Ascending aorta (tissue), 2 donors: ENCODE measurements at regions of chr16 and their contacts with region 1.

Region 1: GRCh38 chr16:10743610-10744393 is at the start of gene NUBP1:
- DNase-seq: peak; percentile 99 to 100
- H3K4me3 ChIP-seq: peak within 1 kb of the TSS; percentile 66 to 71
- H3K27ac ChIP-seq: peak within 1 kb of the TSS; percentile 95
- H3K4me1 ChIP-seq: peaks cover 12 to 24% of the 10 kb centered on the region in 2 donors
- H3K27me3 ChIP-seq: no peaks in the 10 kb centered on the region
- CTCF ChIP-seq: no peak
- total RNA-seq, gene NUBP1: 13.3 TPM

Region 2: DNA sequence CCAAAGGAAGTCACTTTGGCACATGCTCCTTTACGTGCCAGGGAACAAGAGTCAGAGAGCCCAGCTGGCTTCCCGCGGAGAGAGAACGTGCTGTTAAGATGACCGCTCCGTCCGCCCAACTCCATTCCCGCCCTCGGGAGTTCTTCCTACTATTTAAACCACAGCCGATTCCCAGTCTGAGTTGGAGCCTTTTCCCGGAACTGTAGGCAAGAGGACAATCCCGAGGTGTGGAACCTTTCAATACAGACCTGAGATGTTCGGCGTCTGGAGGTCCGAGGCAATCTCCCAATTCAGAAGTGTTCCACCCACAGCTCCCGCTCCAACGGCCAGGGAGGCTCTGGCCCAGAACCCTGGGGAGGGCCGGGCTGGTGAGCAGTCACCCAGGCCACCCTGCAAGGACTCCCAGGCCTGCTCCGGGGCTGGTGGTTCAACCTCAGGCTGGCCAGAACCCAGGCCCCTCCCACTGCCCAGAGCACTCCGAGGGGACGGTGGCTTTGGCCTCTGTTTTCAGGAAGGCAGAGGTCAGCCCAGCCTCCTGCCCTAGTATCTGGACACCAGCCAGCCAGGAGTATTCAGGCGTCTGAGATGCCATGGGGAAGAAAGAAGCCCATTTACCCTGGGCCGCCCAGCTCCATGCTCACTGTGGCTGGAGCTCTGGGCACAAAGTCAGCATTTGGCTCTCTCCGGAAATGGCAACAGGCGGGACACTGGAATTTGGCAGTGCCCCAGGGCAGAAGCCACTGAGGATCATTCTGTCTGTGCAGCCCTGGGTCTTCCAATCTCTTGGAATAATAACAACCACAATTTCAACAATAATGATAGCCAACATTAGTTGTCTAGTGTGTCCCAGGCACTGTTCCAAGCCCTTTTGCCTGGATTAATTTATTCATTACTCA is 184.8 kb before region 1 on chr16:
- intact Hi-C with region 1: loop called (anchors 2 kb)
- DNase-seq: peak; percentile 46 to 88
- H3K4me3 ChIP-seq: peak overlapping the region; percentile 27 to 37
- H3K27ac ChIP-seq: peak overlapping the region; percentile 79 to 93
- H3K4me1 ChIP-seq: peaks cover 12 to 54% of the 10 kb centered on the region in 2 donors
- H3K27me3 ChIP-seq: no peaks in the 10 kb centered on the region
- CTCF ChIP-seq: no peak

Region 3: GRCh38 chr16:10754941-10755340 is 11.1 kb after region 1 on chr16:
- intact Hi-C with region 1: loop called (anchors 1 kb)
- DNase-seq: no peak
- H3K4me3 ChIP-seq: no peak overlapping the region
- H3K27ac ChIP-seq: peak overlapping the region; percentile 77 to 80
- H3K4me1 ChIP-seq: peaks cover 5 to 17% of the 10 kb centered on the region in 2 donors
- H3K27me3 ChIP-seq: no peaks in the 10 kb centered on the region
- CTCF ChIP-seq: no peak

Region 4: GRCh38 chr16:10828851-10829731 is 85.3 kb after region 1 on chr16:
- intact Hi-C with region 1: loop called (anchors 1 kb)
- DNase-seq: peak; percentile 79 to 98
- H3K4me3 ChIP-seq: peak overlapping the region in 1 of 2 donors; percentile 30
- H3K27ac ChIP-seq: peak overlapping the region; percentile 93 to 99
- H3K4me1 ChIP-seq: peaks cover 10 to 25% of the 10 kb centered on the region in 2 donors
- H3K27me3 ChIP-seq: no peaks in the 10 kb centered on the region
- CTCF ChIP-seq: no peak

Region 5: GRCh38 chr16:10944249-10945064 is 200.7 kb after region 1 on chr16 and contains the start of gene CLEC16A:
- intact Hi-C with region 1: loop called (anchors 1 kb)
- DNase-seq: peak; percentile 93 to 99
- H3K4me3 ChIP-seq: peak within 1 kb of the TSS; percentile 98
- H3K27ac ChIP-seq: peak within 1 kb of the TSS; percentile 85 to 86
- H3K4me1 ChIP-seq: peaks cover 20 to 49% of the 10 kb centered on the region in 2 donors
- H3K27me3 ChIP-seq: no peaks in the 10 kb centered on the region
- CTCF ChIP-seq: no peak
- total RNA-seq, gene CLEC16A: 16.2 TPM

Region 6: GRCh38 chr16:11345040-11345862 is 601.4 kb after region 1 on chr16 and contains the start of gene RMI2:
- intact Hi-C with region 1: loop called (anchors 10 kb)
- DNase-seq: peak; percentile 83 to 97
- H3K4me3 ChIP-seq: peak within 1 kb of the TSS; percentile 75 to 83
- H3K27ac ChIP-seq: no peak within 1 kb of the TSS
- H3K4me1 ChIP-seq: peaks cover 5 to 13% of the 10 kb centered on the region in 2 donors
- H3K27me3 ChIP-seq: no peaks in the 10 kb centered on the region
- CTCF ChIP-seq: no peak
- total RNA-seq, gene RMI2: not detected